Caco-2 (cell line): ENCODE measurements at regions of chr15 and their contacts with region 1.

Region 1: DNA sequence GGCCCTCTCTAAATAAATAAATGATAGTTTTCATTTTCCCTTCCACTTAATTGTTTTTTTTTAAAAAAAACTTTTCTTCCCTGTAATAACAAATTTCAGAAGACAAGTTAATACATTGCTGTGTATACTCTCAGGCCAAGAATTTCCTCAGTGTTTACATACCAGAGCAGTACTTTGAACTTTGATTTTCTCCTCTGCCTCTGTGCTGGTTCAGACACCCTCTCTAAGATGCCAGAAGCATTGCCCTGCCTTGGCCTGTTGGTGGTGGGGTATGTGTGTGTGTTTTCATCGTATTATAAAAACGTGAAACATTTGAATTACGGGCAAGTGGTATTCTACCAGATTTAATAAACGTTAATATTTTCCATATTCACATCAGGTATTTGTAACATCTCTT is 70.1 kb downstream of the SMAD3 start:
- DNase-seq: peak; percentile 71 to 73
- H3K4me3 ChIP-seq: no peak overlapping the region
- H3K4me3 Mint-ChIP-seq: peak overlapping the region; percentile 49
- H3K27ac Mint-ChIP-seq: peak overlapping the region; percentile 91
- H3K4me1 ChIP-seq: peaks cover 84% of the 10 kb centered on the region
- H3K4me1 Mint-ChIP-seq: peaks cover 78% of the 10 kb centered on the region
- H3K27me3 ChIP-seq: no peaks in the 10 kb centered on the region
- H3K27me3 Mint-ChIP-seq: no peaks in the 10 kb centered on the region
- CTCF ChIP-seq: peak in 1 of 2 experiments; percentile 50

Region 2: GRCh38 chr15:67165254-67166253 is 30.1 kb after region 1 on chr15:
- CTCF ChIA-PET with region 1: no interaction called
- POLR2A ChIA-PET with region 1: no interaction called
- intact Hi-C with region 1: no loop called
- DNase-seq: no peak
- H3K4me3 ChIP-seq: no peak overlapping the region
- H3K4me3 Mint-ChIP-seq: no peak overlapping the region
- H3K27ac Mint-ChIP-seq: peak overlapping the region; percentile 32
- H3K4me1 ChIP-seq: no peaks in the 10 kb centered on the region
- H3K4me1 Mint-ChIP-seq: peaks cover 7% of the 10 kb centered on the region
- H3K27me3 ChIP-seq: no peaks in the 10 kb centered on the region
- H3K27me3 Mint-ChIP-seq: no peaks in the 10 kb centered on the region
- CTCF ChIP-seq: no peak

Region 3: DNA sequence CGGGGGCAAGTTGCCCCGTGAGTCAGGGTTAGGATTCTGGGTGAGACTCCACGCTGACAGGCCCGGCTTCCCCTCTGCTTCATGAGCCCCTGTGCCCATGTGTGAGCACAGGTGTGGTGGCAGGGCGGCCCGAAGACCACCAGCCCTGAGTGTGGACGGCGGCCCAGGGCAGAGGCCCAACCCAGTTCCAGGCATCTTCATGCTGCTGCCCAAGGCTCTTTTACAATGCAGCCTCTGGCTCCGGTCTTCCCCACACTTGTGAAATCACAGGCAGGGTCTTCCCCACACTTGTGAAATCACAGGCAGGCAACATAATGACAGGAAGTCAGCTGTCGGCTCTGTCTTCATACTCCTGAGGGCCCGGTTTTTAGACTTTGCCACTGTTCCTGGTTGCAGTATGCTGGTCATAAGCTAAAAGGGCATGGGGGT is 40.2 kb after region 1 on chr15:
- CTCF ChIA-PET with region 1: no interaction called
- POLR2A ChIA-PET with region 1: no interaction called
- intact Hi-C with region 1: loop called (anchors 1 kb)
- DNase-seq: no peak
- H3K4me3 ChIP-seq: no peak overlapping the region
- H3K4me3 Mint-ChIP-seq: no peak overlapping the region
- H3K27ac Mint-ChIP-seq: peak overlapping the region; percentile 26
- H3K4me1 ChIP-seq: peaks cover 53% of the 10 kb centered on the region
- H3K4me1 Mint-ChIP-seq: peaks cover 51% of the 10 kb centered on the region
- H3K27me3 ChIP-seq: no peaks in the 10 kb centered on the region
- H3K27me3 Mint-ChIP-seq: no peaks in the 10 kb centered on the region
- CTCF ChIP-seq: no peak